ENCODE measurements at regions of chr22 and their contacts with region 1.

Region 1: DNA sequence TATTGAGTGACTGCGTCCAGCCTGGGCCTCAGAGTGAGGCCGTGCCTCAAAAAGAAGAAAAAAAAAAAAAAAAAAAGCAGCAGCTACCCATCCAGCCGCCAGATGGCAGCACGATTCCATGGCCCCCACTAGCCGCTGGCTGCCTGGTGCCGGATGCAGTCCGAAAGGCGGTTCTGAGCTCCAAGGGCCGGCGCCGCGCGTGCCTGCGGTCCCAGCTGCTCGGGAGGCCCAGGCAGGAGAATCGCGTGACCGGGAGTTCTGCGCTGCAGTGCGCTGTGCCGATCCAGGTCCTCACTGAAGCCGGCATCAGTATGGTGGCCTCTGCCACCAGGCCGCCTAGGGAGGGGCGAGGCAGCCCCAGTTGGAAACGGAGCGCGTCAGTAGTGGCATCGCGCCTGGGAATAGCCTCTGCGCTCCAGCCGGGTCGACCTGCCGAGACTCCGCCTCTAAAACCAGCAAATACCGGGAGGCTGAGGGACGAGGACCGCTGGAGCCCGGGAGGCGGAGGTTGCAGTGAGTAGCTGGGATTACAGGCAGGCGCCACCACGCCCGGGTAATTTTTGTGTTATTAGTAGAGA is 19.3 kb downstream of the SCARF2 start:
- DNase-seq: peak; percentile 40 to 88 (median 76)
- ATAC-seq: peak; percentile 82
- H3K4me3 ChIP-seq: peak overlapping the region; percentile 37 to 44
- H3K4me3 Mint-ChIP-seq: peak overlapping the region; percentile 68
- H3K27ac ChIP-seq: no peak overlapping the region
- H3K27ac Mint-ChIP-seq: no peak overlapping the region
- H3K4me1 ChIP-seq: no peaks in the 10 kb centered on the region
- H3K4me1 Mint-ChIP-seq: peaks cover 3% of the 10 kb centered on the region
- H3K27me3 ChIP-seq: no peaks in the 10 kb centered on the region
- H3K27me3 Mint-ChIP-seq: no peaks in the 10 kb centered on the region
- CTCF ChIP-seq: peak; percentile 92

Region 2: DNA sequence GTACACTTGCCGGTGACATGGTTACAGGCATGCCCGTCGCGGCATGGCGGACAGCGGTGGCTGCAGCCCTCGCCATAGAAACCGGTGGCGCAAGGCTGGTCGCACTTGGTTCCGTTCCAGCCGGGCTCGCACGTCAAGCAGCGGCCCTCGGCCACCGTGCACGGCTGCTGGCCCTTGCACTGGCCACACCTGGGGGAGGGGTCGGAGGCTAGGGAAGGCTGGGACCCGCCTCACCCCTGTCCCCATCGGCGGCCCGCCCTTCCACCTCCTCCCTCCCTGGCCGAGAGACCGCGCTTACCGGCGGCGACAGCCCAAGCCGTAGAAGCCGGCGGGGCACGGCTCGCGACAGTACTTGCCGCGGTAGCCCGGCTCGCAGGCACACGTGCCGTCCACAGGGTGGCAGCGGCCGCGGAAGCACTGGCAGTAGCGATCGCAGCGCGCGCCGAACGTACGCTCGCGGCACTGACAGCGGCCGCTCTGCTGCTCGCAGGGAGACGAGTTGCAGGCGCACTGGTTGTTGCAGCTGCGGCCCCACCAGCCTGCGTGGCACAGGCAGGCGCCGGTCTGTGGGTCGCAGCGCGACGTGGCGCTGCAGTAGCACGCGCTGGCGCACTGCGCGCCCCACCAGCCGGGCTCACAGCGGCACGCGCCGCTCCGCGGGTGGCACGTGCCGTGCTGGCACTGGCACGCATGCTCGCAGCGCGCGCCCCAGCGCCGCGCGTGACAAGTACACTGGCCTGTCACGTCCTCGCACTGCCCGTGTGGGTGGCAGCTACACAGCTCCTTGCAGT is 12.6 kb after region 1 on chr22:
- CTCF ChIA-PET with region 1: interaction called, 16 read pairs
- POLR2A ChIA-PET with region 1: interaction called, 3 read pairs
- intact Hi-C with region 1: no loop called
- DNase-seq: peak; percentile 33 to 81 (median 62)
- ATAC-seq: peak; percentile 58
- H3K4me3 ChIP-seq: peak overlapping the region; percentile 60 to 67
- H3K4me3 Mint-ChIP-seq: peak overlapping the region; percentile 83
- H3K27ac ChIP-seq: no peak overlapping the region
- H3K27ac Mint-ChIP-seq: no peak overlapping the region
- H3K4me1 ChIP-seq: peaks cover 35% of the 10 kb centered on the region
- H3K4me1 Mint-ChIP-seq: peaks cover 35% of the 10 kb centered on the region
- H3K27me3 ChIP-seq: peaks cover 24 to 29% of the 10 kb centered on the region in 2 experiments
- H3K27me3 Mint-ChIP-seq: peaks cover 42% of the 10 kb centered on the region
- CTCF ChIP-seq: peak; percentile 18

Region 3: GRCh38 chr22:20456064-20456721 is 37.9 kb after region 1 on chr22:
- CTCF ChIA-PET with region 1: interaction called, 88 read pairs
- POLR2A ChIA-PET with region 1: interaction called, 4 read pairs
- intact Hi-C with region 1: loop called (anchors 1 kb)
- DNase-seq: peak; percentile 48 to 90 (median 75)
- ATAC-seq: peak; percentile 100
- H3K4me3 ChIP-seq: no peak overlapping the region
- H3K4me3 Mint-ChIP-seq: no peak overlapping the region
- H3K27ac ChIP-seq: no peak overlapping the region
- H3K27ac Mint-ChIP-seq: peak overlapping the region; percentile 4
- H3K4me1 ChIP-seq: peaks cover 16% of the 10 kb centered on the region
- H3K4me1 Mint-ChIP-seq: peaks cover 34% of the 10 kb centered on the region
- H3K27me3 ChIP-seq: no peaks in the 10 kb centered on the region
- H3K27me3 Mint-ChIP-seq: no peaks in the 10 kb centered on the region
- CTCF ChIP-seq: peak; percentile 87

Region 4: GRCh38 chr22:20495861-20496681 is 77.8 kb after region 1 on chr22:
- CTCF ChIA-PET with region 1: interaction called, 9 read pairs
- POLR2A ChIA-PET with region 1: no interaction called
- intact Hi-C with region 1: loop called (anchors 1 kb)
- DNase-seq: peak; percentile 83 to 96 (median 91)
- ATAC-seq: peak; percentile 96
- H3K4me3 ChIP-seq: peak overlapping the region; percentile 75 to 83
- H3K4me3 Mint-ChIP-seq: peak overlapping the region; percentile 89
- H3K27ac ChIP-seq: peak overlapping the region; percentile 61 to 98
- H3K27ac Mint-ChIP-seq: peak overlapping the region; percentile 91
- H3K4me1 ChIP-seq: peaks cover 42% of the 10 kb centered on the region
- H3K4me1 Mint-ChIP-seq: peaks cover 41% of the 10 kb centered on the region
- H3K27me3 ChIP-seq: no peaks in the 10 kb centered on the region
- H3K27me3 Mint-ChIP-seq: no peaks in the 10 kb centered on the region
- CTCF ChIP-seq: peak; percentile 95

Region 5: DNA sequence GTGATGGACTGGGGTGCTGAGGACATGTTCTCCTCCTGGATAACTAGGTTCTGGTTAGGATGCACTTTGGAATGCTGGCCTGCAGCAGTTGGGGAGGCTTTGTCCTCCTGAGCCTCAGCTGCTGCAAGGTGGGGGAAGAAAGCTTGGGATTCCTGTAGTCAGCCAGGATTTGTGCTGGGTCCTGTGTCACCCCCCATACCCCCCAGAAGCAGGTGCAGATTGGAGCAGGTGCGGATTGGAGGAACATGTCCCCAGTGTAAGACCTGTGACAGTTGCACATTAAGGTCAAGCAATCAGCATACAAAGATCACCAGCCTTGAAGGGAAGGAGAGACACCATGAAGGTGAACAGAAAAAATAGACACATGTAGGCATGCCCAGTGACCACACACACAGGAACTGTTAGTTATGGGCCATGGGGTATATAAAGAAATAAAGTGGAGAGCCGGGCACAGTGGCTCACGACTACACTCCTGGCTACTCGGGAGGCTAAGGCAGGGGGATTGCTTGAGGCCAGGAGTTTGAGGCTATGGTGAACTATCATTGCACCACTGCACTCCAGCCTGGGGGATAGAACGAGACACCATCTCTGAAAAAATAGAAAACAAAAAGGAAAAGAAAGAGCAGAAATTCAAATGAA is 140.4 kb after region 1 on chr22:
- CTCF ChIA-PET with region 1: interaction called, 6 read pairs
- POLR2A ChIA-PET with region 1: no interaction called
- intact Hi-C with region 1: loop called in 1 of 2 experiments (anchors 2 kb)
- DNase-seq: no peak
- ATAC-seq: no peak
- H3K4me3 ChIP-seq: no peak overlapping the region
- H3K4me3 Mint-ChIP-seq: peak overlapping the region; percentile 75
- H3K27ac ChIP-seq: peak overlapping the region in 1 of 2 experiments; percentile 87
- H3K27ac Mint-ChIP-seq: peak overlapping the region; percentile 97
- H3K4me1 ChIP-seq: peaks cover 65% of the 10 kb centered on the region
- H3K4me1 Mint-ChIP-seq: peaks cover 82% of the 10 kb centered on the region
- H3K27me3 ChIP-seq: no peaks in the 10 kb centered on the region
- H3K27me3 Mint-ChIP-seq: no peaks in the 10 kb centered on the region
- CTCF ChIP-seq: no peak

Region 6: GRCh38 chr22:20741634-20742581 is 323.6 kb after region 1 on chr22:
- CTCF ChIA-PET with region 1: interaction called, 9 read pairs
- POLR2A ChIA-PET with region 1: no interaction called
- intact Hi-C with region 1: loop called in 1 of 2 experiments (anchors 1 kb)
- DNase-seq: peak in 7 of 9 experiments; percentile 15 to 60 (median 50)
- ATAC-seq: no peak
- H3K4me3 ChIP-seq: no peak overlapping the region
- H3K4me3 Mint-ChIP-seq: no peak overlapping the region
- H3K27ac ChIP-seq: no peak overlapping the region
- H3K27ac Mint-ChIP-seq: no peak overlapping the region
- H3K4me1 ChIP-seq: no peaks in the 10 kb centered on the region
- H3K4me1 Mint-ChIP-seq: no peaks in the 10 kb centered on the region
- H3K27me3 ChIP-seq: no peaks in the 10 kb centered on the region
- H3K27me3 Mint-ChIP-seq: no peaks in the 10 kb centered on the region
- CTCF ChIP-seq: peak; percentile 75

Measured in CD8-positive, alpha-beta T cell (primary cell).